ENCODE measurements at regions of chr15 and their contacts with region 1.

Region 1: GRCh38 chr15:34367101-34368081 is at the start of gene LPCAT4:
- DNase-seq: peak; percentile 86
- ATAC-seq: peak; percentile 77
- H3K4me3 Mint-ChIP-seq: peak within 1 kb of the TSS; percentile 96
- H3K27ac Mint-ChIP-seq: peak within 1 kb of the TSS; percentile 95
- H3K4me1 Mint-ChIP-seq: peaks cover 17% of the 10 kb centered on the region
- H3K27me3 Mint-ChIP-seq: no peaks in the 10 kb centered on the region; the same call in 1 of the 2 replicates
- CTCF ChIP-seq: peak; percentile 40
- total RNA-seq, gene LPCAT4: 68.6 to 97.2 TPM (median 70.6 TPM) in 3 replicates

Region 2: GRCh38 chr15:34292621-34293020 is 74.8 kb before region 1 on chr15:
- CTCF ChIA-PET with region 1: no interaction called
- POLR2A ChIA-PET with region 1: no interaction called
- DNase-seq: no peak
- ATAC-seq: no peak
- H3K4me3 Mint-ChIP-seq: no peak overlapping the region
- H3K27ac Mint-ChIP-seq: no peak overlapping the region
- H3K4me1 Mint-ChIP-seq: no peaks in the 10 kb centered on the region
- H3K27me3 Mint-ChIP-seq: peaks cover 19% of the 10 kb centered on the region
- CTCF ChIP-seq: no peak

Region 3: GRCh38 chr15:34324933-34325332 is 42.5 kb before region 1 on chr15:
- CTCF ChIA-PET with region 1: no interaction called
- POLR2A ChIA-PET with region 1: no interaction called
- DNase-seq: no peak
- ATAC-seq: no peak
- H3K4me3 Mint-ChIP-seq: no peak overlapping the region
- H3K27ac Mint-ChIP-seq: no peak overlapping the region
- H3K4me1 Mint-ChIP-seq: no peaks in the 10 kb centered on the region
- H3K27me3 Mint-ChIP-seq: no peaks in the 10 kb centered on the region; the same call in 1 of the 2 replicates
- CTCF ChIP-seq: no peak

Region 4: GRCh38 chr15:34337557-34338306 is 29.7 kb before region 1 on chr15 and contains the start of gene SLC12A6:
- CTCF ChIA-PET with region 1: interaction called, 27 read pairs
- POLR2A ChIA-PET with region 1: interaction called, 9 read pairs
- DNase-seq: peak; percentile 91
- ATAC-seq: peak; percentile 91
- H3K4me3 Mint-ChIP-seq: peak within 1 kb of the TSS; percentile 97
- H3K27ac Mint-ChIP-seq: peak within 1 kb of the TSS; percentile 95
- H3K4me1 Mint-ChIP-seq: peaks cover 22% of the 10 kb centered on the region
- H3K27me3 Mint-ChIP-seq: peaks cover 6% of the 10 kb centered on the region
- CTCF ChIP-seq: no peak
- total RNA-seq, gene SLC12A6: 13.3 to 16.2 TPM (median 14.7 TPM) in 3 replicates

Region 5: GRCh38 chr15:34342737-34343575 is 24.4 kb before region 1 on chr15 and contains the starts of genes NOP10 and NUTM1:
- CTCF ChIA-PET with region 1: interaction called, 27 read pairs
- POLR2A ChIA-PET with region 1: interaction called, 9 read pairs
- DNase-seq: peak; percentile 97
- ATAC-seq: peak; percentile 79
- H3K4me3 Mint-ChIP-seq: no peak within 1 kb of the TSS
- H3K27ac Mint-ChIP-seq: peak within 1 kb of the TSS; percentile 85
- H3K4me1 Mint-ChIP-seq: peaks cover 30% of the 10 kb centered on the region
- H3K27me3 Mint-ChIP-seq: no peaks in the 10 kb centered on the region
- CTCF ChIP-seq: peak; percentile 98
- total RNA-seq, gene NOP10: 220 to 234 TPM (median 227 TPM) in 3 replicates
- total RNA-seq, gene NUTM1: 0.46 to 0.69 TPM (median 0.66 TPM) in 3 replicates

Region 6: GRCh38 chr15:34434627-34435305 is 67.4 kb after region 1 on chr15:
- CTCF ChIA-PET with region 1: no interaction called
- POLR2A ChIA-PET with region 1: no interaction called
- DNase-seq: no peak
- ATAC-seq: no peak
- H3K4me3 Mint-ChIP-seq: no peak overlapping the region
- H3K27ac Mint-ChIP-seq: no peak overlapping the region
- H3K4me1 Mint-ChIP-seq: no peaks in the 10 kb centered on the region
- H3K27me3 Mint-ChIP-seq: peaks cover 40% of the 10 kb centered on the region
- CTCF ChIP-seq: no peak

Region 7: GRCh38 chr15:34587717-34588674 is 220.6 kb after region 1 on chr15:
- CTCF ChIA-PET with region 1: interaction called, 13 read pairs
- POLR2A ChIA-PET with region 1: interaction called, 4 read pairs
- DNase-seq: peak; percentile 60
- ATAC-seq: peak; percentile 61
- H3K4me3 Mint-ChIP-seq: peak overlapping the region; percentile 59
- H3K27ac Mint-ChIP-seq: peak overlapping the region; percentile 94
- H3K4me1 Mint-ChIP-seq: peaks cover 24% of the 10 kb centered on the region
- H3K27me3 Mint-ChIP-seq: peaks cover 19% of the 10 kb centered on the region
- CTCF ChIP-seq: peak; percentile 31; the same call in 1 of the 2 replicates

Region 8: DNA sequence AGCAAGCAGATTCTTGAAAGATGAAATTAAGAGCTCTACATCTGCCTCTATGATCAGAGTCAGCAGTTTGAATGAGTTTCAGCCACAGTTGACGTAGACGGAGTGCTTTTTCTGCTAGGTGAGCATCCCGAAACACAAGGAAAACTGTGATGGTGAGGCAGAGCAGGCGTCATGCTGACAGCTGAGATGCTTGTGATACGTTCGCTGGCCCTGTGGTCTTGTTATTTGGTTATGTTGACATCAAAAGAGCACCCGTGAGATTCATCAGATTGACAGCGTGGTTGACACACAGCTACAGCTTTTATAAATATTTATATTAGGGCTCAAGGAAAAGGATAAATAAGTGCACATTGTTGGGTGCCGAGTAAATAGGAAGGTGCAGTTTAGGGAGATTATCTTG is 235.7 kb after region 1 on chr15:
- CTCF ChIA-PET with region 1: no interaction called
- POLR2A ChIA-PET with region 1: no interaction called
- DNase-seq: no peak
- ATAC-seq: no peak
- H3K4me3 Mint-ChIP-seq: no peak overlapping the region
- H3K27ac Mint-ChIP-seq: no peak overlapping the region
- H3K4me1 Mint-ChIP-seq: no peaks in the 10 kb centered on the region
- H3K27me3 Mint-ChIP-seq: peaks cover 4% of the 10 kb centered on the region
- CTCF ChIP-seq: no peak